Left ventricle myocardium superior (tissue), 1 donor: ENCODE measurements at regions of chr2 and their contacts with region 1.

Region 1: DNA sequence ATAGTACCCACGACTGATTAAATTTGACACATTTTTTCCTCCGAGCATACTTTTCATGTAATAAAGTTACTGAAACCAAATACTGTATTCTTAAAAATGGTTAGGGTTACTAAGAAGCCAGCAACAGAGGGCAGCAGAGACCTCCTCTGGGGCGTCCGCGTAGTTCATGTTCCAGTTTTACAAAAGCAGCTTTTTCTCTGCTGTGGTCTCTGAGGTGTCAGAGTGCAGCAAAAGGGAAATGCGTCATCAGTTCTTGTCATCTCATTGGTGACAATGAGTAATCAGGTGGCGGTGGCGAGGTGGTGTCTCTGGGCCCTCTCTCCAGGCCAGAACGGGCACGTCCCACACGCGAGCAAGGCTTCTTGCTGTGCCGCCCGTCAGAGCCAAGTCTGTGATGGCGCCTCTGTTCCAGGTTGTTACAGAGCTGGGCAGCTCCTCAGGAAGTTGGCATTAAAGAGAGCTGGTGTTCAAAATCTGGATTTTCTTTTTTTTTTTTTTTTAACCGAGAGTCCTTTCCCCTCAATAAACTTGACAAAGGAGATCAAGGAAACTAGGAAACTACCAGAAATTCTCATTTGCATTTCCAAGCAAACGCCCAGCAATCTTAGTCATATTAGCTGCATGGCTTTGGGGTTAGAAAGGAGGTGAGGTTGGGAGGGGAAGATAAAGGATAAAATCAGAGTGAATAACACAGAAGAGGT is 98.6 kb upstream of the BZW1 start:
- DNase-seq: peak; percentile 85
- ATAC-seq: peak; percentile 98

Region 2: DNA sequence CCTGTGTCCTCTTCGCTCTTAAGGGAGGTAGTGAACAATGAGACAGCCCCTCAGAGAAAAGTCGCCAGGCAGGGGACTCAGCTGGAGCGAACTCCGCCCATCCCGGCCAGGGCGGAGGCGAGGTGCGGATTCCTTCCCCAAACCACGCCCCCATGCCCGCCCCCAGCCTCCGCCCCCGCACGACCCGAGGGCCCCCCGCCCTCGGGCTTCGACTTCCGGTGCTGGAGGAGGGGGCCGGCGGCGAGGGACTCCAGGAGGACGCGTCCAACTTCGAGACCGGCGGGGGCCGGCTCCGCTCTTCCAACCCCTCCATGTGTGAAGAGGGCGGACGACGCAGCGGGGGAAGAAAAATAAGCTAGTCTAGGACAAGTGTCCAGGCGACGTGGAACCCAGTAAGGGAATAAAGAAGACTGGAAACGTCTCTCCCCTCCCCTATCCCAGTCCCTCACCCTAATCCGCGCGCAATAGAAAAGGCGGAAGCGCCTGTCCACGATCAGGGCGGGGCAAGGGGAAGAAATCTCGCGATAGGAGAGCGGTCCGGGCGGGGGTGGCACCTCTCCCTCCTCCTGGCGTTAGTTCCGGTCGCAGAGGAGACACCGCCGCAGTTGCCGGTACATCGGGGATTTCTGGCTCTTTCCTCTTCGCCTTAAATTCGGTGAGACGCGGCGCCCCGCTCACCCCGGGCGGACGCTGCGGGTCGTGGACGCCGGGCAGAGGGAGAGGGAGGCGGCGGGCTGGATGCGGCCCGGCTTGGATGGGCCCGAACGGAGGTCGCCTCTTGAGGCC is 98.4 kb after region 1 on chr2 and contains the start of gene BZW1:
- intact Hi-C with region 1: loop called (anchors 5 kb)
- DNase-seq: peak; percentile 96
- ATAC-seq: peak; percentile 93
- total RNA-seq, gene BZW1: 71.2 TPM